ENCODE measurements at regions of chr6 and their contacts with region 1.

Region 1: DNA sequence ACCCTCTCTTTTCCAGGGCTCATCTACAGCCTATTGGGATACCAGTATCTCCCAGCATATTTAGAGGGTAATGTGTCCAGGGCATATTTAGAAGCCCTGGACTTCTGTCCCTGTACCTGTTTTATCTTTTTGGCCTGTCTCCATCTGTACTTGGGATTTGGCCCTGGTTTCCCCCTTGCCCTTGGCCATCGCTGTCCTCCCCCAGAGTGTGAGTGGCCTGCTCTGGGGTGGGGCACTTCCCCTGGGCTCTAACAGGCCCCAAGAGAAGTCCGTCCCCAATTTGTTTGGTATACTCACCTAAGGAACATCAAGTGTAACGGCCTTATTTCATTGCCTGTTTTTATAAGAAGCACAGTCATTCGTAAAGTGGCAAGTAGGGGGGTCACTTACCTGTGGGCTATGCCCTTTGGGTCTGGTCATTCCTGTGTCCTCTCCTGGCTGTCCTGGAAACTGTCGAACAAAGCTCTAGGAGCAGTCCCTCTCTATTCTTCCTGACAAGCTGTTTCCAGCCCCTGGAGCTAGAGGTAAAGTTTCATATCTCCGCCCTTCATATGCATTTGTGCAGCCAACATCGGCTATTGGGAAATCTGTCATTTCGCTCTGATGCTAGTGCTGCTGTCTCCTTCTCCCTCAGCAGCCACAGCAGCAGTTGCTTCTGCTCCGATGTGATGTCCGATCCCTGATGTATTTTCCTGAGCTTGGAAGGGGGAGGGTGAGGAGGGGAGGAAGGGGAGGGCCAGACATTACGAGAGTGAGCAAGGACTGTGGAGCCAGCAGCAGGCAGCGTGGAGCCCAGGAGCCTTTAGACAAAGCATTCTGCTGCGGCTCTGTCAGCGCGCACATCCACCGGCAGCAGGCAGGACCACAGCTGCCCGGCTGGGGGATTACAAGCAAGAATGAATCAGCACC is 83.4 kb downstream of the TCP11 start:
- DNase-seq: peak in 4 of 5 donors; percentile 45 to 68 (median 52)
- ATAC-seq: peak; percentile 47 to 72 (median 66)
- H3K4me3 ChIP-seq: peak overlapping the region in 3 of 12 donors; percentile 4 to 28 (median 10)
- H3K27ac ChIP-seq: peak overlapping the region; percentile 41 to 82 (median 74)
- H3K4me1 ChIP-seq: peaks cover 0 to 82% (median 43%) of the 10 kb centered on the region in 12 donors
- H3K27me3 ChIP-seq: no peaks in the 10 kb centered on the region
- CTCF ChIP-seq: no peak
- POLR2A ChIP-seq: no peak

Region 2: GRCh38 chr6:35096129-35096862 is 38.6 kb after region 1 on chr6:
- intact Hi-C with region 1: loop called in 1 of 10 experiments (anchors 5 kb)
- DNase-seq: no peak
- ATAC-seq: peak in 3 of 4 donors; percentile 32 to 61 (median 53)
- H3K4me3 ChIP-seq: no peak overlapping the region
- H3K27ac ChIP-seq: peak overlapping the region in 10 of 12 donors; percentile 26 to 70 (median 49)
- H3K4me1 ChIP-seq: peaks cover 0 to 39% (median 24%) of the 10 kb centered on the region in 12 donors
- H3K27me3 ChIP-seq: no peaks in the 10 kb centered on the region
- CTCF ChIP-seq: no peak
- POLR2A ChIP-seq: no peak

Measured in heart left ventricle (tissue), 16 donors.